ENCODE measurements at regions of chr18 and their contacts with region 1.

Region 1: DNA sequence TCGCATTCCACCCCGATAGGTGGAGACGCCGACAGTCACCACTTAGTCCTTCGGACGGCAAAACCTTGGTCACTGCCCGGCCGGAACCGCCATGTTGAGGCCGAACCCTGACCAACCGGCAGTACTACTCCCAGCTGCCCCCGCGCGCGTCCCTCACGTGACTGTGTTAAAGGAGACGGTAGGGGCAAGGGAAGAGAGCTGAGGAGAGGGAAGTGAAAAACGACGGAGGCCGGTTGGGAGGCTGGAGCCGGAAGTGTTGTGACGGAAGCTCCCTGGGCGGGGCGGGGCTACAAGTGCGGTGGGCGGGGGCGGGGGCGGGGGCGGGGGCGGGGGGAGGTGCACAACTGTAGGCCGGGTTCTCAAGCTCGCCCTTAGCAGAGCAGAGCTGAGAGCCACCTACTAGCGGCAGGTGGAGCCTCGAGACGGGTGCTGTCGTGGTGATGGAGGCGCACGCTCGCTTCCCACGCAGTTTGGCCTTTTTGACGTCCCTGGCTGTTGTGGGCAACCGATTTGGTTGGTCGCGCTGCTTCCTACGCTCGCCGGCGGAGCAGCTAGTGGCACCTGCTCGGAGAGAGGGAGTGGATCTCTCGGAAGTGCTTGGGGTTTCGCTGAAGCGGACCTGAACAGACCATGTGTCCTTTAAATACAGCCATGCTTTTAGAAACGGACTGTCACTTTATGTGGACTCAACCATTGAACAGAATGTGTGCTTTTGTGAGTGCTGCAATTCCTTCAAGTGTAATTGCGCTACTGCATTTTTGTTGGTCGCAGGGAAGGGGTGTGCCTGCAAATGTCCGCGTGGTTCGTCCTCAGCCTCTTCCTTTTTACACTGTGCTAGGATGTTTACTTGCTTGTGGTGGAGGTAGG is at the start of gene TRAPPC8:
- DNase-seq: peak; percentile 95
- H3K4me3 Mint-ChIP-seq: peak within 1 kb of the TSS; percentile 100
- H3K27ac Mint-ChIP-seq: peak within 1 kb of the TSS; percentile 99
- H3K4me1 Mint-ChIP-seq: peaks cover 36% of the 10 kb centered on the region
- H3K27me3 Mint-ChIP-seq: no peaks in the 10 kb centered on the region
- total RNA-seq, gene TRAPPC8: 30.4 to 34.2 TPM

Region 2: DNA sequence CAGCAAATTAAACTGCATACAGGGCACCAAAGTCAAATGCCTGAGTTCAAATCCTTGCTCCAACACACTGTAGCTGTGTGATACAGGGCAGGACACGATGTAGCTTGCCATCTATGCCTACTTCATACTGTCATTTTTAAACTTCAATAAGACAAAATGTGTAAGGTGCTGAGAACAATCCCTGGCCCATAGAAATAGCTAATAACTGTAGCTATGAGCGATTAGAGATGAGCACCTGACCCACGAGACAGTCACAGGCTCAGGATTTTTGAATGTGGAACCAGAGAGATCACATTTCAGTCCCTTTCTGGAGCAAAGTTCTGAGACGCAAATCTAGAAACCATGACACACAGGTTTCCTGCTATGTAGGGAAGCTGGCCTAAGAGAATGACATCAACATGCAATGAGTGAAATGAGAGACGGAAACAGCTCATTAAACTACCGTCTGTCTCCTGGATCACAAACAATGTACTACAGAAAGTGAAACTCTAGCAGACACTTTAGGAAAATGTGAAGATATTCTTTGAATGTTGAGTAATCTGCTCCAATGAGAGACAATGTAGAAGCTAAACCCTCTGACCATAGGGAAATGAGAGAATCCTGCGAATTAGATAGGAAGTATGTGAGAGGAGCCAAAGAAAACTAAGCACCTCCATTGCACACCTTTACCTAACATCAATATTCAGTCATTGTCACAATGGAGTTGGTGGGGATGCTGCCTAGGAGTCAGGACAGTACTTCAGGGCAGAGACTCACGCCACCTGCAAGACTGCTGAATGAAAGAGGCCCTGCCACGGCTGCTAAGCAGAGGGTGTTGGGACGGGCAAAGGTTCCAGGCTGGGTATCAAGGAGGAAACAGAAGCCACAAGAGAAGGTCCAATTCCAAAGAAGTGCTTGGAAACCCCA is 284.3 kb before region 1 on chr18:
- CTCF ChIA-PET with region 1: no interaction called
- POLR2A ChIA-PET with region 1: no interaction called
- intact Hi-C with region 1: loop called (anchors 1 kb)
- DNase-seq: peak; percentile 34
- H3K4me3 Mint-ChIP-seq: no peak overlapping the region
- H3K27ac Mint-ChIP-seq: peak overlapping the region; percentile 60
- H3K4me1 Mint-ChIP-seq: peaks cover 23% of the 10 kb centered on the region
- H3K27me3 Mint-ChIP-seq: peaks cover 2% of the 10 kb centered on the region

Region 3: GRCh38 chr18:31957728-31958127 is 14.5 kb after region 1 on chr18:
- CTCF ChIA-PET with region 1: interaction called, 4 read pairs
- POLR2A ChIA-PET with region 1: no interaction called
- intact Hi-C with region 1: loop called (anchors 1 kb)
- DNase-seq: no peak
- H3K4me3 Mint-ChIP-seq: no peak overlapping the region
- H3K27ac Mint-ChIP-seq: no peak overlapping the region
- H3K4me1 Mint-ChIP-seq: peaks cover 2% of the 10 kb centered on the region
- H3K27me3 Mint-ChIP-seq: no peaks in the 10 kb centered on the region

Region 4: GRCh38 chr18:32018331-32019250 is 75.4 kb after region 1 on chr18 and contains the start of gene RNF125:
- CTCF ChIA-PET with region 1: interaction called, 16 read pairs
- POLR2A ChIA-PET with region 1: interaction called, 38 read pairs
- intact Hi-C with region 1: loop called (anchors 1 kb)
- DNase-seq: peak; percentile 90
- H3K4me3 Mint-ChIP-seq: peak within 1 kb of the TSS; percentile 100
- H3K27ac Mint-ChIP-seq: peak within 1 kb of the TSS; percentile 97
- H3K4me1 Mint-ChIP-seq: peaks cover 40% of the 10 kb centered on the region
- H3K27me3 Mint-ChIP-seq: no peaks in the 10 kb centered on the region
- total RNA-seq, gene RNF125: 36.8 to 37.6 TPM

Region 5: GRCh38 chr18:32072321-32072720 is 129.1 kb after region 1 on chr18:
- CTCF ChIA-PET with region 1: interaction called, 18 read pairs
- POLR2A ChIA-PET with region 1: no interaction called
- intact Hi-C with region 1: loop called (anchors 2 kb)
- DNase-seq: no peak
- H3K4me3 Mint-ChIP-seq: no peak overlapping the region
- H3K27ac Mint-ChIP-seq: peak overlapping the region; percentile 13
- H3K4me1 Mint-ChIP-seq: peaks cover 27% of the 10 kb centered on the region
- H3K27me3 Mint-ChIP-seq: no peaks in the 10 kb centered on the region

Region 6: DNA sequence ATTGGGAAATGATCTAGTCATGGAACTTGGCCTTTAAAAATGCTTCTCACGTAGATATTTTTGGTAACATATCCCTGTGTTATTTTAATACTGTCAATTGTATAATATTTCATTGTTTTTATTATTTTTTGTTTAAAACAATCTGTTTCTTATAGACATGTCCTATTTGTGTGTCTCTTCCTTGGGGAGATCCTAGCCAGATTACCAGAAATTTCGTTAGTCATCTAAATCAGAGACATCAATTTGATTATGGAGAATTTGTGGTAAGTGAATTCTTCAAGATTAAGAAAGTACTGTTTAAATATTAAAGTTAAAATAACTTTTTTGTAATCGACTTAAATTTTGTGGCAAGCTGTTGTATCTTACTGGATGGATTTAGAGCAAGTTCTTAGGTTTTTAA is 183.3 kb after region 1 on chr18:
- CTCF ChIA-PET with region 1: no interaction called
- POLR2A ChIA-PET with region 1: no interaction called
- intact Hi-C with region 1: no loop called
- DNase-seq: no peak
- H3K4me3 Mint-ChIP-seq: no peak overlapping the region
- H3K27ac Mint-ChIP-seq: no peak overlapping the region
- H3K4me1 Mint-ChIP-seq: no peaks in the 10 kb centered on the region
- H3K27me3 Mint-ChIP-seq: no peaks in the 10 kb centered on the region

Measured in activated CD4-positive, alpha-beta memory T cell treated with anti-CD3 and anti-CD28 coated beads for 36 hours (primary cell).